RWPE1 (cell line): ENCODE measurements at regions of chr1 and their contacts with region 1.

Region 1: GRCh38 chr1:63327417-63328139 is 5.2 kb downstream of the FOXD3 start:
- DNase-seq: peak; percentile 66
- H3K27ac ChIP-seq: no peak overlapping the region
- CTCF ChIP-seq: peak; percentile 68

Region 2: DNA sequence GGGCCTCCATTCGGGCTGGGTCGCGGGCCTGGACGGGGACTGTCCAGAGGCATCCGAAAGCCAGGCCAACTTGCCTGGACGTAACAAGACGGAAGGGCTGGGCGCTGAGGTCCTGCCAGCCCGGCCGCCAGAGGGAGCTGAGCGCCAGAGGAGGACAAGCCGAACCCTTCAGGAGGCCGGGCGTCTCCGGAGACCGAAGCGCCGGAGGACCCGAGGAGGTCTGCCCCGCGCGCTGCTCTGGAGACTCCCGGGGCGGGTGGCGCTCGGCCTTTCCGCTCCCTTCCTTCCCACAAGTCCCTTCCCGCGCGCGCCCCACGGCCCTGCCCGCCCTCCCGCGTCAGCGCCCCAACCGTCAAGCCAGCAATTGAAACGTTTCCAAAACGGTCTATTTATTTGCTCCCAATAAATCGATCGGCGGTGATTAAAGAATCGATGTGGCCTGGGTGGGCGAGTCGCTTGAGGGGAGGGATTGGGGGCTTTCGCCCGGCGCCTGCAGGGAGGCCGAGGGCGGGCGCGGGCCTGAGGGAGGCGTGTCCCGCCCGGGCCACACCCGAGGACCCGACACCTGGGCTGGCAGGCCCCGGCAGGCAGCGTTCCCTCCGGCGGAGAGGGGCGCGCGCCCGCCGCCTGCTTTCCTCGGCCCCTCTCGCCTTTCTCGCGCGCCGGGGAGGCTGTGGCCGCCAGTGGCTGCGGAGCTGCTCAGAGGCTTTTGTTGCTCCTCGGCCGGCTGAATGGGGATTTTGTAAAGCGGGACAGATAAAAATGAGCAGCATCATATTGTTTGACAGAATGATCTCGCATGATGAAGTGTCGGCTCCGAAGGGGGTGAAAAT is 10.4 kb before region 1 on chr1:
- CTCF ChIA-PET with region 1: interaction called, 14 read pairs
- POLR2A ChIA-PET with region 1: no interaction called
- DNase-seq: peak; percentile 66
- H3K27ac ChIP-seq: no peak overlapping the region
- CTCF ChIP-seq: peak; percentile 68

Region 3: DNA sequence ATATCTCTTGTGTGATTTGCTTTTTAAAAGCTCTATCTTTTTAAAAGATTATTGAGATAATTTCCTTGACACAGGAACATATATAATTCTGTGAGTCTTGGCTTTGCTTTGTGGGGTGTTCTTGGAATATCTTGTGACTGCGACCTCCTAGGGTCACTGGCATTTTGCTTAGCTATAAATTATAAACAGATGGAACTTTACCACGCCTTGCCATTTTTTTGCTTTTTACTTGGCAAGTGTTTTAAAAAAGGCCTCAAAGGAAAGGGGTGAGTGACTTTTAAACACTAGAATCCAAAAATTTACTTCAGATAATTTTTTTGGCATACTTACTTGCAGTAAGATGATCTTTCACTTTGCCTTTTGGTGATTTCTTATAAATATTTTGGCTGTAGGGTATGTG is 83.5 kb after region 1 on chr1:
- CTCF ChIA-PET with region 1: no interaction called
- POLR2A ChIA-PET with region 1: no interaction called
- DNase-seq: no peak
- H3K27ac ChIP-seq: no peak overlapping the region
- CTCF ChIP-seq: no peak